ENCODE measurements at regions of chr1 and their contacts with region 1.

Region 1: DNA sequence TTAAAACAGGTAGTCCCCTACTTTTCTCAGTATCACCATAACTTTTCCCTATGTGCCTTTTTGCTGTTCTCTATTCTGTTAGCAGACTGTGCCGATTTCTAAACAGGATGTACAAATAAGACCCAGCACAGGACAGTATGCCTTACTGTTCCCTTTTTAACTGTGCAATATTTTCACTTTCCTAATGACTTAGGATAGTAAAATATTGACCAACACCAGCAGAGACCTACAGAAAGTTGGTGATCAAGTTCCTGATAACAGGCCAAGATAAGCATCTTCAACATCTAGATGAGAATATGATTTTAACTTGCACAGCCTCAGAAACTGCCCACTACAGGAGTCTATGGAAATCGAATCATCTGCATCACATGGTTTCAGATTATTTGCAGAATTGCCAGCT is 42.0 kb downstream of the ADSS2 start:
- DNase-seq: no peak
- ATAC-seq: no peak
- H3K4me3 Mint-ChIP-seq: no peak overlapping the region
- H3K27ac Mint-ChIP-seq: no peak overlapping the region
- H3K4me1 Mint-ChIP-seq: no peaks in the 10 kb centered on the region
- H3K27me3 Mint-ChIP-seq: no peaks in the 10 kb centered on the region
- CTCF ChIP-seq: no peak

Region 2: DNA sequence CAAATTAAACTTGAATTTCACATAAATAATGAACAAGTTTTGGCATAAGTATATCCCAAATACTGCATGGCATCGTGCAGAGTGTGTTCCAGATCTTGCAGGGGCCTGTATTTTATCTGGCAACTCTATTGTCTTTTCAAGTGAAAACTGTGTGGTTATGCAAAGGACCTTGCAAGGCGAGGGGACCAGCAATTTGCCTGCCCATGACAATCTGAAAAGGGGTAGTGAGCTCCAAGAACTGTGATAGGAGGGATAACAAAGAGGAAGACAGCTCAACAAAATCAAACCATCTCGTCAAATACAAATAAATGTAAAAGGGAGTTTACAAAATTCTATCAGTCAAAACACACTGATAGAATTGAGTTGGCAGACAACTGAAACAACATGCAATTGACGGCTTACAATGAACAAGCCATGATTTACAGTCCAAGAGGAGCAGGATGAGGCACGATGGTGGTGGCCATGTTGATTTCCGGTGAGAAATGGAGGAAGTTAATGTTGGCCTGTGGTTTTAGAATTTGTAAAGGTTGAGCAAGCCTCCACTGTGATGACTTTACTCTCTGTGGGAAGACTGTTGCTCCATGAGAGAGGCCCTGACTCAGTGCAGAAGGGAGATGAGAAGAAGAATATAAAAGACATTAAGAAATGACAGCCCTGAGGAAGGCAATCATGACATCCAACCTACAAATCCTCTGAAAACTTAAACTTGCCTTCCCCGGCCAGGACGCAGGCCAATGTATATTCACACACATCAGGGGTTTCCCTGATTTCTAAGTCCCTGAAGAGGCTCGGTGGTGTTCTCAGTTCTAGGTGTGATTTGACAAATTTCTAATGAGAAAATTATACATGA is 90.2 kb before region 1 on chr1:
- CTCF ChIA-PET with region 1: no interaction called
- POLR2A ChIA-PET with region 1: no interaction called
- intact Hi-C with region 1: loop called (anchors 10 kb)
- DNase-seq: no peak
- ATAC-seq: peak; percentile 90
- H3K4me3 Mint-ChIP-seq: peak overlapping the region; percentile 46
- H3K27ac Mint-ChIP-seq: peak overlapping the region; percentile 82
- H3K4me1 Mint-ChIP-seq: peaks cover 46% of the 10 kb centered on the region
- H3K27me3 Mint-ChIP-seq: no peaks in the 10 kb centered on the region
- CTCF ChIP-seq: no peak

Region 3: GRCh38 chr1:246181241-246181640 is 1771.5 kb after region 1 on chr1:
- CTCF ChIA-PET with region 1: no interaction called
- POLR2A ChIA-PET with region 1: no interaction called
- intact Hi-C with region 1: no loop called
- DNase-seq: no peak
- ATAC-seq: no peak
- H3K4me3 Mint-ChIP-seq: no peak overlapping the region
- H3K27ac Mint-ChIP-seq: no peak overlapping the region
- H3K4me1 Mint-ChIP-seq: peaks cover 2% of the 10 kb centered on the region
- H3K27me3 Mint-ChIP-seq: no peaks in the 10 kb centered on the region
- CTCF ChIP-seq: no peak

Measured in activated B cell treated with CpG ODN at 0.5 μM for 24 hours (primary cell).